GM10248 (cell line): ENCODE measurements at regions of chr18 and their contacts with region 1.

Region 1: DNA sequence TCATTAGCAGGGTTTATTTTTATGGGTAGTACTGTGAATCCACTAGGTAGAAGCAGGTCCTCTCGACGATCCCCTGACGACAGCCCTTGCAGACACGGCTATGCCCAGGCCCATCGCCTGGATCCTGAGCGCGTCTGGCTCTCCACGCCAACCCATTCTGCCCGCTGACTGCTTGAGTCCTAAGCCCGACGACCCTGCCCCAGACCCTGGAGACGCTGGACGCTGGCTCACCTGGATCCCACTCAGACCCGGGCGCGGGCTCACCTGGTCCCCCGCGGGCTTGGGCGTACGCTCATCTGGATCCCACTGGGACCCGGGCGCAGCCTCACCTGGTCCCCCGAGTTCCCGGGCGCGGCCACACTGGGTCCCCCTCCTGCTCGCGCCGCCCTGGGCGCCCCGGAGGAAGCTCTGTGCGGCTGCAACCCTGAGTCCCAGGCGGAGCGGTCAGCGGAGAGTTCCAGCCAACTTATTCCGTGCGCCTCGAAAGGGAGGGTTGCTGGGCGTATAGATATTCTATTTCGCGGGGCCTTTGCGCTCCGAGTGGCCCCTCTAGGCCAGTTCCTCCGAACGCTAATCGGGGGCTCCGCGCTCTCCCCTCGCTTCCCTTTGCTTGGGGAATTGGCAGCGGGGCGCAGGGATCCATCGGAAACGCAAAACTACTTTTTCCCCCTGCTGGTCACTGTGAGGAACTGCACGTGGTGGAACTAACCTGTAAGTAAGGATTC is 22.4 kb upstream of the RMP24 start:
- DNase-seq: peak; percentile 67
- CTCF ChIP-seq: peak; percentile 81

Region 2: GRCh38 chr18:35756506-35757117 is 193.5 kb before region 1 on chr18:
- CTCF ChIA-PET with region 1: interaction called, 64 read pairs
- POLR2A ChIA-PET with region 1: no interaction called
- DNase-seq: peak; percentile 69
- CTCF ChIP-seq: peak; percentile 71

Region 3: DNA sequence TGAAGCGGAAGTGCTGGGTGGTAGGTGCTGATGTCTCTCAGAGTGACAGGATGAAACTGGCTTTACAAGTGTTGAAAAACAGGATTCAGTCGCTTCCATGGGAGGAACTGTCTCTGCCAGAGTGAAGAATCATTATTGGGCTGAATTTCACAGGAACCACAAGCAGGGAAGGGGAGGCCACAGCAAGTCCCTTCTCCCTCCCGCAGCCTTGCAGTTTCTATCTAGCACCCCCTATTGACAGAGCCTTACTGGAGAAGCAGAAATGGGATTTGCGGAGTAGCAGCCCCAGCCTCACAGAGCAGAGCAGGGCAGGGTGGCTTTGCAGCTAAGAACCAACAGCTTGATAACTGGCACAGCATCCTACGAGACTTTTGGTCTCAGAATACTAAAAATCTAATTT is 10.9 kb before region 1 on chr18:
- CTCF ChIA-PET with region 1: interaction called, 26 read pairs
- POLR2A ChIA-PET with region 1: no interaction called
- DNase-seq: no peak
- CTCF ChIP-seq: peak; percentile 22

Region 4: DNA sequence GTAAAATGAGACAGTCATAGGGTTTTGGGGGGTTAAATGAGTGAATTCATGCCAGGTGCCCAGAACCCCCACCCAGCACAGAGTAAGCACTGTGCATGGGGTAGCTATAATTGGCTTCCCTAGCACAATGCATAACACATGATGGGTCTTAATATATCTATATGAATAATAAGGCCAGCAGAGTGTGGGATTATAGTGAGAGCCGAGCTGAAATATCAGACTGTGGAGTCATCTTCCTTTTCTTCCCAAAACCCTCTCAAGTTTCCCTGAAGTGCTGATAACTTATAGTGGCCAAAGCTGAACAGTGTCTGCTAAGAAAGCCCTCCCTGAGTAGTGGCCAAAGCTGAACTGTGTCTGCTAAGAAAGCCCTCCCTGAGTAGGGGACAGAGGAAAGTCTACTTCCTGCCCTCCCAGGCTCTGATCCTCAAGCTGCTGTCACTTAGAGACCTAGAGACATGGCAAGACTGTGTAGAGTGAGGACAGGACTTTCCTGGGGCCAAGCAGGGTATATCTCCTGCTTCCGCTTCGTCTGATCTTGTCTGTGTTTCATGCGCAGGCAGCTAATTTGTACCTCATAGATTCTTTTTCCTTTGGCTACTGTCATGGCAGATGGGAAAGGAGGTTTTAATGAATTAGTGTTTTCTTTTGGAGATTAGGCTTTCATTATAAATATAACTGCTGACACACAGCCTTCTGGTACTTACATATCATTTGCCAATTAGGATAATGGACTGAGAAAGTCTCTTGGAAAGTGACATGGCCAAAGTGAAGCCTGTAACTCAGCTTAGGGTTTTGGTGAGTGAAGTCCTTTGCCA is 442.3 kb after region 1 on chr18:
- CTCF ChIA-PET with region 1: no interaction called
- POLR2A ChIA-PET with region 1: no interaction called
- DNase-seq: no peak
- CTCF ChIP-seq: no peak